ENCODE measurements at regions of chr3 and their contacts with region 1.

Region 1: GRCh38 chr3:103585809-103586208 is 1151.0 kb downstream of the ZPLD1 start:
- DNase-seq: no peak
- ATAC-seq: no peak
- H3K4me3 ChIP-seq: no peak overlapping the region
- H3K27ac ChIP-seq: no peak overlapping the region
- H3K4me1 ChIP-seq: no peaks in the 10 kb centered on the region
- H3K27me3 ChIP-seq: no peaks in the 10 kb centered on the region
- CTCF ChIP-seq: no peak

Region 2: GRCh38 chr3:103532986-103533385 is 52.8 kb before region 1 on chr3:
- CTCF ChIA-PET with region 1: no interaction called
- POLR2A ChIA-PET with region 1: interaction called, 11 read pairs
- in situ Hi-C with region 1: no loop called
- intact Hi-C with region 1: no loop called
- DNase-seq: no peak
- ATAC-seq: no peak
- H3K4me3 ChIP-seq: no peak overlapping the region
- H3K27ac ChIP-seq: no peak overlapping the region
- H3K4me1 ChIP-seq: no peaks in the 10 kb centered on the region
- H3K27me3 ChIP-seq: no peaks in the 10 kb centered on the region
- CTCF ChIP-seq: no peak